ENCODE measurements at regions of chr14 and their contacts with region 1.

Region 1: DNA sequence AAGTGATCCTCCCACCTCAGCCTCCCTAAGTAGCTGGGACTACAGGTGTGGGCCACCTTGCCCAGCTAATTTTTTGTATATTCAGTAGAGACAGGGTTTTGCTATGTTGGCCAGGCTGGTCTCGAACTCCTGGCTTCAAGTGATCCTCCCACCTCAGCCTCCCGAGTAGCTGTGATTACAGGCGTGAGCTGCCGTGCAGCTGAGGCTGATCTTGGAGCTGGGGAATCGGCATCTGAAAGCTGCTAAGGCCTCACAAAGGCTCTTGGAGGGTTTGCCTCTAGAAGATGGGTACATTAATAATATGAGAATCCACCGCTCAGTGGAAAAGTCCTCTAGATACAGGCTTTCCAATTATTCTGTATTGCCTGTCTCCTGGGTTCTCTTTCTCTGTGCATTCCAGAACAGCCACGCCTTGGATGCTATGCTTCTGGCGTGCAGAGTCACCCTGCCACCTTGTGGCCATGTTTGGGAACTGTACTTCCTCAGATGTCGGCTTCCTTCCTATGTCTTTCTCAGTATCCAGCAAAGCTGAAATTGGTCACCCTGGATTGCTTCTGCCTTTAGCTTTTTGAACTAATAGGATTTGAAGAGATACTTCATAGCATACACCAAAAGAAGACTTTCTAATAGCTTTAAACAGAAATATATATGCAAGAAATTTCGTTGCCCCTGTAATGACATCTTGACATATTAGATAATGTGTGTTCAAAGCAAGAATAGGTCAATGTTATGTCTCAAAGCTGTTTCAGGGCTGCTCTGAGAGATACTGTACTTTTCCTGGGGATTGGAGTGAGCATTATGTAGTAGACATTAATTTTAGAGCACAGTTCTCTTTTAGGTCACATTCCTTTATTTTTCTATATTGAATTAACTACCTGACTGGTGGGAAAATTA is 75.4 kb downstream of the SNAPC1 start:
- DNase-seq: peak; percentile 60
- H3K4me3 ChIP-seq: no peak overlapping the region
- H3K27ac ChIP-seq: no peak overlapping the region
- H3K4me1 ChIP-seq: no peaks in the 10 kb centered on the region
- H3K27me3 ChIP-seq: no peaks in the 10 kb centered on the region
- CTCF ChIP-seq: peak; percentile 95

Region 2: GRCh38 chr14:61269321-61270083 is 568.1 kb before region 1 on chr14:
- CTCF ChIA-PET with region 1: interaction called, 4 read pairs
- dilution Hi-C with region 1: no loop called
- in situ Hi-C with region 1: no loop called
- intact Hi-C with region 1: loop called (anchors 1 kb)
- DNase-seq: peak; percentile 71
- H3K4me3 ChIP-seq: peak overlapping the region; percentile 52 to 55 (median 54)
- H3K27ac ChIP-seq: no peak overlapping the region
- H3K4me1 ChIP-seq: no peaks in the 10 kb centered on the region
- H3K27me3 ChIP-seq: peaks cover 4% of the 10 kb centered on the region
- CTCF ChIP-seq: peak; percentile 66 to 73

Region 3: DNA sequence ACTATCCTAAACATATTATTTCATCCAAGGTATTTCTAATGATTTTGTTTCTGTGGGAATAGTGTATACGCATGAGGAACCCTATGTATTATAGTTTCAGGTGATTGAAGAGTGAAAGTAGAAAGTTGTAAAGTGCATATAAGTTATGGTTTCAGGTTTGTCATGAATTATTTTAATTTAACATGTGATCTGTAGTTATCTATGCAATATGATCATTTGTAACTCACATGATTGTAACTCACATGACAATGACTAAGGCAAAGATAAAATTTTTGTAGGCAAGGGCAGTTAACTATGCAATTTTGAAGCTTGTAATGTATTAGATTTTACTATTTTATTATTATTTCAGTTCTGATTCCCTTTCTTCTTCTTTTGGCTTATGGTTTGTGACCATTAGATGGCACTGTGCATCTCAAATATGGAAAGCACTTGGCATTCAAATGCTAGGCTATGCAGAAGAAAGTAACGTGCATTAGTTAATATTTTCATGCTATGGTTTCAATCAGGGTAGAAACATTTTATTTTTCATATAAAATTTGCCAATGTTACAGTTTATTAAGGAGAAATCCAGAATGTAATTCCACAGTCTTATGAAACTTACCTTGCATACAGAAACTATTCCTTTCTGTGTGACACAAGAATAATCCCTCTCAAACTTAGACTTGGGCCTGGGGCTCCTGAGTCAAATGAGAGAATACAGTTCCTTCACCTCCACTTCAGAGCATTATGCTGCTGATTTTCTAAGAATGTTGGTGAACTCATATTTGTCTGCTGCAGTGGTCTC is 540.7 kb before region 1 on chr14:
- CTCF ChIA-PET with region 1: no interaction called
- dilution Hi-C with region 1: no loop called
- in situ Hi-C with region 1: loop called (anchors 25 kb)
- intact Hi-C with region 1: loop called (anchors 1 kb)
- DNase-seq: peak; percentile 37
- H3K4me3 ChIP-seq: no peak overlapping the region
- H3K27ac ChIP-seq: no peak overlapping the region
- H3K4me1 ChIP-seq: no peaks in the 10 kb centered on the region
- H3K27me3 ChIP-seq: no peaks in the 10 kb centered on the region
- CTCF ChIP-seq: peak; percentile 72 to 74

Region 4: DNA sequence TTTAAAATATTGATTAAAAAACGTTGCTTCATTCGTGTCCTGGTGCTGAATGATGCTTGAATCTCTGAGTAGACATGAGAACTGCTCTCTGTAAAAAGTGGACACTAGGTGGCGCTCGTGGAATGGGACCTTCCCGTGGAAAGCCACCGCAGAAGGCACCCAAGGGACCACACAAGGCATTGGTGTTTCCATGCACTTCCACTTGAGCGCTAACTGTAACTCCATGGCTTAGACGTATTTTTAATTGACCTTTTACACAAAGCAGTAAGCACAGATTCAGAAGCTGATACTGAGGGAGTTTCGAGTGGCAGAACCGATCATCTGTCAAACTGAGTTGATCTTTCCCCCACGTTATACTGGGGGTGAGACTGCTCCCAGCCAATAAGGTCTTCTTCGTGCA is 380.9 kb before region 1 on chr14:
- CTCF ChIA-PET with region 1: no interaction called
- dilution Hi-C with region 1: loop called (anchors 5 kb)
- in situ Hi-C with region 1: loop called (anchors 5 to 10 kb)
- intact Hi-C with region 1: loop called (anchors 1 kb)
- DNase-seq: peak; percentile 49
- H3K4me3 ChIP-seq: no peak overlapping the region
- H3K27ac ChIP-seq: no peak overlapping the region
- H3K4me1 ChIP-seq: peaks cover 10% of the 10 kb centered on the region
- H3K27me3 ChIP-seq: no peaks in the 10 kb centered on the region
- CTCF ChIP-seq: peak; percentile 81 to 85

Region 5: GRCh38 chr14:61461808-61462275 is 375.7 kb before region 1 on chr14:
- CTCF ChIA-PET with region 1: no interaction called
- dilution Hi-C with region 1: no loop called
- in situ Hi-C with region 1: loop called (anchors 5 to 10 kb)
- intact Hi-C with region 1: loop called (anchors 1 kb)
- DNase-seq: peak; percentile 63
- H3K4me3 ChIP-seq: no peak overlapping the region
- H3K27ac ChIP-seq: peak overlapping the region; percentile 28
- H3K4me1 ChIP-seq: peaks cover 37% of the 10 kb centered on the region
- H3K27me3 ChIP-seq: no peaks in the 10 kb centered on the region
- CTCF ChIP-seq: peak; percentile 53 to 59

Region 6: DNA sequence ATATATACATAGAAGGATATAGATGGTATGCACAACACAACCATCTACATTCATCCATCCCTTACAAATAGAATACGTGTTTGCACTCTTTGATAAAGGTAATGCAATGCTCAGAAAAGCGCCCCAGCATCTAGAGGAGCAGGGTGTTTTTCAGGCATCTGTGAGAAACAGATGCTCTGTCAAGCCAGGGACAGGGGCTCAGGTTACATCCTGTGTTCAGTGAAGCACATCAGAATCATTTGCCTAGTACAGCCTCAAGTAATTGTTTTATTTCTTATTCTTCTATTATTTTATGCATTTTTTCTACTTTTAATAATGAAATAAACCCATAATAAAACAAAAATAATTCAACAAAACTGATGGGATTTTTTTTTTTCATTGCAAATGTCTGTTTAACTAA is 192.7 kb before region 1 on chr14:
- CTCF ChIA-PET with region 1: interaction called, 15 read pairs
- dilution Hi-C with region 1: no loop called
- in situ Hi-C with region 1: no loop called
- intact Hi-C with region 1: no loop called
- DNase-seq: no peak
- H3K4me3 ChIP-seq: no peak overlapping the region
- H3K27ac ChIP-seq: no peak overlapping the region
- H3K4me1 ChIP-seq: peaks cover 25% of the 10 kb centered on the region
- H3K27me3 ChIP-seq: no peaks in the 10 kb centered on the region
- CTCF ChIP-seq: no peak

Region 7: GRCh38 chr14:61710853-61711817 is 126.4 kb before region 1 on chr14:
- CTCF ChIA-PET with region 1: no interaction called
- dilution Hi-C with region 1: no loop called
- in situ Hi-C with region 1: no loop called
- intact Hi-C with region 1: no loop called
- DNase-seq: no peak
- H3K4me3 ChIP-seq: no peak overlapping the region
- H3K27ac ChIP-seq: no peak overlapping the region
- H3K4me1 ChIP-seq: no peaks in the 10 kb centered on the region
- H3K27me3 ChIP-seq: no peaks in the 10 kb centered on the region
- CTCF ChIP-seq: no peak

Region 8: GRCh38 chr14:61750708-61751474 is 86.7 kb before region 1 on chr14:
- CTCF ChIA-PET with region 1: no interaction called
- dilution Hi-C with region 1: loop called (anchors 5 kb)
- in situ Hi-C with region 1: no loop called
- intact Hi-C with region 1: loop called (anchors 2 kb)
- DNase-seq: peak; percentile 90
- H3K4me3 ChIP-seq: peak overlapping the region; percentile 40 to 65 (median 45)
- H3K27ac ChIP-seq: peak overlapping the region; percentile 58
- H3K4me1 ChIP-seq: peaks cover 26% of the 10 kb centered on the region
- H3K27me3 ChIP-seq: no peaks in the 10 kb centered on the region
- CTCF ChIP-seq: no peak

Region 9: GRCh38 chr14:61812761-61813606 is 24.6 kb before region 1 on chr14:
- CTCF ChIA-PET with region 1: no interaction called
- dilution Hi-C with region 1: no loop called
- in situ Hi-C with region 1: no loop called
- intact Hi-C with region 1: no loop called
- DNase-seq: peak; percentile 5
- H3K4me3 ChIP-seq: peak overlapping the region in 2 of 3 experiments; percentile 29 to 35
- H3K27ac ChIP-seq: no peak overlapping the region
- H3K4me1 ChIP-seq: peaks cover 5% of the 10 kb centered on the region
- H3K27me3 ChIP-seq: peaks cover 28% of the 10 kb centered on the region
- CTCF ChIP-seq: no peak

Region 10: GRCh38 chr14:61950340-61950739 is 112.8 kb after region 1 on chr14:
- CTCF ChIA-PET with region 1: no interaction called
- dilution Hi-C with region 1: no loop called
- in situ Hi-C with region 1: no loop called
- intact Hi-C with region 1: no loop called
- DNase-seq: no peak
- H3K4me3 ChIP-seq: no peak overlapping the region
- H3K27ac ChIP-seq: no peak overlapping the region
- H3K4me1 ChIP-seq: no peaks in the 10 kb centered on the region
- H3K27me3 ChIP-seq: no peaks in the 10 kb centered on the region
- CTCF ChIP-seq: no peak

Measured in mammary epithelial cell (primary cell).